Activated T-helper 2 cell treated with anti-CD3 and anti-CD28 coated beads, Interferon-gamma antibody, Interleukin-2, Interleukin-4, amounts not matched to agents 10 μg/mL and 5 μg/mL and 100 μg/mL, durations not matched to agents 14 hours and 24 hours and 36 hours (primary cell): ENCODE measurements at regions of chr5 and their contacts with region 1.

Region 1: GRCh38 chr5:147822686-147823491 is 8.6 kb downstream of the SPINK1 start:
- DNase-seq: no peak
- H3K4me3 Mint-ChIP-seq: no peak overlapping the region
- H3K27ac Mint-ChIP-seq: no peak overlapping the region
- H3K4me1 Mint-ChIP-seq: no peaks in the 10 kb centered on the region
- H3K27me3 Mint-ChIP-seq: peaks cover 18% of the 10 kb centered on the region

Region 2: GRCh38 chr5:147453875-147454814 is 368.7 kb before region 1 on chr5:
- intact Hi-C with region 1: loop called (anchors 2 kb)
- DNase-seq: peak; percentile 60
- H3K4me3 Mint-ChIP-seq: peak overlapping the region; percentile 81
- H3K27ac Mint-ChIP-seq: no peak overlapping the region
- H3K4me1 Mint-ChIP-seq: peaks cover 5% of the 10 kb centered on the region
- H3K27me3 Mint-ChIP-seq: peaks cover 61% of the 10 kb centered on the region

Region 3: GRCh38 chr5:147628058-147628895 is 194.6 kb before region 1 on chr5:
- intact Hi-C with region 1: loop called (anchors 1 kb)
- DNase-seq: peak; percentile 30
- H3K4me3 Mint-ChIP-seq: no peak overlapping the region
- H3K27ac Mint-ChIP-seq: no peak overlapping the region
- H3K4me1 Mint-ChIP-seq: no peaks in the 10 kb centered on the region
- H3K27me3 Mint-ChIP-seq: no peaks in the 10 kb centered on the region

Region 4: DNA sequence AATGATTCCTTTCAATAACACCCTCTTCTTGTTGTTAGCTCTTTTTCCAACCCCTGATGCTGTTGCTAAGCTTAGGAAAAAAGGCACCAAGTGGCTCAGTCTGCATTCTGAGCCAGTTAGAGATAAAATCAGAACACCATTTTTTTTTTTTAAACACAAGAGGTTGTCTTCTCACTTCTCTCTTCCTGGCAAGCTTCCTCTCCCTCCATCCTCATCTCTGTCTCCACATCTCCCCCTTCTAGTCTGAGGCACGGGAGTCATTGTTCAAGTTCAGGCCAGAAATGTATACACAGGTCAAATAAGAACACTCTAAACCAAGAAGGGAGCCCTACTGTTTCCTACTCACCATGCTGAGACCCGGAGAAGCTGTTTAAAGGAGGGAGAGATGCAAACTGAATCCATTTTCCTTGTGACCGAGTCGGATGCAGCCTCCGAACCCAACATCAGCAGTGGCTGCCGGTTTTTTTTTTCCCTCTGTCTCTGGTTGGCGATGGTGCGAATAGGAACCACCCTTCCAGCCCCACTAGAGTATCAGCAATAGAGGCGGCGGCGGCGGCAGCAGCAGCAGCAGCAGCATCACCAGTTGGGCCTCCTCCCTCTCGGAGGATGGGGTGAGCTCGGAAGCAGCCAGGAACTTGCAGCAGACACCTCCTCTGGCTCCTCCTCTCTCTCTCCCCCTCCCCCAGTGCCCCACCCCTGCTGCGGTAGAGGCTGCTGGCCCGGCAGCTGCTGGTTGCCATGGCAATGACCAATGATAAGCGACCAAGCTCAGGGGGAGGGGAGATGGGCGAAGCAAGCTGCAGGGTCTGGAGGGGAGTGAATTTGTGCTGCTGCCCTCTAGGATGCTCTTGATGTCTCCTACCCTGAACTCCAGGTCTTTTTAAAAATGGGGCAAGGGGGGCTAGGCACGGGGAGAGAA is 40.5 kb before region 1 on chr5 and contains the start of gene JAKMIP2:
- intact Hi-C with region 1: loop called (anchors 1 kb)
- DNase-seq: peak; percentile 90
- H3K4me3 Mint-ChIP-seq: peak within 1 kb of the TSS; percentile 93
- H3K27ac Mint-ChIP-seq: peak within 1 kb of the TSS; percentile 92
- H3K4me1 Mint-ChIP-seq: peaks cover 25% of the 10 kb centered on the region
- H3K27me3 Mint-ChIP-seq: peaks cover 15% of the 10 kb centered on the region
- total RNA-seq, gene JAKMIP2: 4.1 and 4.9 TPM in 2 replicates

Region 5: DNA sequence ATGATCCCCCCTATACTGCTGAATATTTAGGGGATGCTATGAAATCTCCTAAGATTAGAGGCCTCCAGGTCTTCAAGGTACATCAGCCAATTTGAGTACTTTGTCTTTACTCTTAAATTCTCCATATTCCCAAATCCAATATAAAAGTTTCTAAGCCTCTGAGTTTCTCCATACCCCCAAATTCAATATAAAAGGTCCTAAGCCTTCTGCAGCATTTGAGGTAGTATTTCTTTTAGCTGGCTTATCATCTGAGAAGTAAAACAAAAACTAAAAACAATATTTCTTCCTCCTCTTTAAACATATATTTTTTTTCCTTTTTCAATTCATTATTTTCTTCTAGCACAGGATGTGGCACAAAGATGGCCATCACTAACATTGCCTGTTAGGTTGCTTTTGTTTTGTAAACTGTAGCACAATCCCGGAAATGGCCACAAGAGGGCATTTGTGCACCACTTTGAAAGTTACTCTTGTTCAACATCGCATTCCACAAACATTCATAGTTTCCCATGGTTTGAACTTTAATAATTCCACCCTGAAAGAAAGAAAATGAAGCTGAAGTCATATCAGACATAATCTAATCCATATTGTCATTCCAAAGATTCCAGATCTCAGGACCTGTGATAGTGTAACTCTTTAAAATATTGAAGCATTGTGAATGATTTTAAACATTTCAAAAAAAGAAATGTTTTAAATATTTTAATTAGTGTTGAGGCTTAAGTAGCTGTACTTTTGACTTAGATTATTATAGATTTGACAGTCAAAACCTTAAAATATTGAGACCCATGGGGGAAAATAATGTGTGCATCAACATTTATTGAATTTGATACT is 34.6 kb after region 1 on chr5:
- intact Hi-C with region 1: no loop called
- DNase-seq: peak; percentile 12
- H3K4me3 Mint-ChIP-seq: no peak overlapping the region
- H3K27ac Mint-ChIP-seq: no peak overlapping the region
- H3K4me1 Mint-ChIP-seq: peaks cover 1% of the 10 kb centered on the region
- H3K27me3 Mint-ChIP-seq: peaks cover 9% of the 10 kb centered on the region